ENCODE measurements at regions of chr17 and their contacts with region 1.

Region 1: GRCh38 chr17:14118951-14119350 is 49.6 kb downstream of the COX10 start:
- DNase-seq: peak; percentile 31
- H3K4me3 Mint-ChIP-seq: peak overlapping the region; percentile 55
- H3K27ac Mint-ChIP-seq: peak overlapping the region; percentile 94
- H3K4me1 Mint-ChIP-seq: peaks cover 96% of the 10 kb centered on the region
- H3K27me3 Mint-ChIP-seq: no peaks in the 10 kb centered on the region

Region 2: DNA sequence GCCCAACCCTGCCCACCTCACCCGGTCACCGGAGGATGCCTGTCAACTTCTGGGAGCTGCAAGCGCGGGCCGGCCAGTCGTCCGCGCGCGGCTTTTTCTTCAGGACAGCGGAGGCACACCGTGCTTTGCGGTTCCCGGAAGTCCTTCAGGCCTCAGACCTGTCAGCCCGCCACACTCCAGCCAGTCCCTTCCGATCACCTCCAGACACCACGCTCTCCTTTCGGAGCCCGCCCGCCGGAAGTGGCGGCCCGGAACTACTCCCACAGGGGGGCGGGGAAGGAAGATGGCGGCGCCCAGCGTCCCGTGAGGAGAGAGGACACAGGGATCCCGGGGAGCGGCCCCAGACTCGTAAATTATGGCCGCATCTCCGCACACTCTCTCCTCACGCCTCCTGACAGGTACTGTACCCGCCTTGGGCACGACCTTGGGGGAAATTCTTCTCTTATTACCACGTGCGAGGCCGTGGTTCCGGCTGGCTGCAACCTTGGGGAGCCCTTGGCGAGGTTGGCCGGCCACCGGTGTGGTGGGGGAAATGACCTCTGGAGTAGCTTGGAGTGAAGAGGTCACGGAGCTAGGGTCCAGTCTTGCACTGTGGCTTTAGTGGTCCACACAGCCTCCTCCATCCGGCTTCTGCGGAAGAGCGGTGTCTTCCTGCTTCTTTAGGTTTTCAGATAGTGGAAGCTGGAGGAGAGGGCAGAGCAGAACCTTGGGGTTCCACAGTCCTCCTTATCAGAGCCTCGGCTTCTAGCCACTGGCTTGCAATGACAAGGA is 49.5 kb before region 1 on chr17 and contains the start of gene COX10:
- intact Hi-C with region 1: loop called (anchors 1 kb)
- DNase-seq: peak; percentile 85
- H3K4me3 Mint-ChIP-seq: peak within 1 kb of the TSS; percentile 97
- H3K27ac Mint-ChIP-seq: peak within 1 kb of the TSS; percentile 94
- H3K4me1 Mint-ChIP-seq: peaks cover 78% of the 10 kb centered on the region
- H3K27me3 Mint-ChIP-seq: no peaks in the 10 kb centered on the region
- total RNA-seq, gene COX10: 40.1 and 41.7 TPM in 2 replicates

Region 3: DNA sequence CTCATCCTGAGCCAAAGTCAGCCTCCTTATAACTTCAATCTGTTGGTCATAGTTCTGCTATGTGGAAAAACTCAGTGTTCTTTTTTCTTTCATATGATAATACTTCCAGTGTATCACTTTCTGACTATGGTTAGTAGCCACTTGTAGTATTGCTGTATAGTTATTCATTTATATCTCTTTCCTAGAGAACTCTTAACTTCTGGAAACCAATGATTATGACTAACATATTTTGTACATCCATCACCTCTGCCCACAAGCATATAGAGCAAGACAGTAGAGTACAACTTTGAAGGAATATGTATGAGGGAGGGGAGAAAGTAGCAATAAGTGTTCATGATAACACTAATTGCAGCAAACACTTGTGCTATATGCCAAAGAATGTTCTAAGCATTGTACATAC is 11.1 kb before region 1 on chr17:
- intact Hi-C with region 1: loop called (anchors 1 kb)
- DNase-seq: no peak
- H3K4me3 Mint-ChIP-seq: no peak overlapping the region
- H3K27ac Mint-ChIP-seq: no peak overlapping the region
- H3K4me1 Mint-ChIP-seq: peaks cover 44% of the 10 kb centered on the region
- H3K27me3 Mint-ChIP-seq: no peaks in the 10 kb centered on the region

Region 4: GRCh38 chr17:14152721-14153120 is 33.8 kb after region 1 on chr17:
- intact Hi-C with region 1: loop called (anchors 5 kb)
- DNase-seq: no peak
- H3K4me3 Mint-ChIP-seq: no peak overlapping the region
- H3K27ac Mint-ChIP-seq: no peak overlapping the region
- H3K4me1 Mint-ChIP-seq: peaks cover 55% of the 10 kb centered on the region
- H3K27me3 Mint-ChIP-seq: no peaks in the 10 kb centered on the region

Region 5: GRCh38 chr17:14427900-14428647 is 309.1 kb after region 1 on chr17:
- intact Hi-C with region 1: loop called (anchors 1 kb)
- DNase-seq: peak; percentile 54
- H3K4me3 Mint-ChIP-seq: peak overlapping the region; percentile 63
- H3K27ac Mint-ChIP-seq: peak overlapping the region; percentile 76
- H3K4me1 Mint-ChIP-seq: peaks cover 41% of the 10 kb centered on the region
- H3K27me3 Mint-ChIP-seq: peaks cover 3% of the 10 kb centered on the region